MCF 10A (cell line): ENCODE measurements at regions of chr2 and their contacts with region 1.

Region 1: DNA sequence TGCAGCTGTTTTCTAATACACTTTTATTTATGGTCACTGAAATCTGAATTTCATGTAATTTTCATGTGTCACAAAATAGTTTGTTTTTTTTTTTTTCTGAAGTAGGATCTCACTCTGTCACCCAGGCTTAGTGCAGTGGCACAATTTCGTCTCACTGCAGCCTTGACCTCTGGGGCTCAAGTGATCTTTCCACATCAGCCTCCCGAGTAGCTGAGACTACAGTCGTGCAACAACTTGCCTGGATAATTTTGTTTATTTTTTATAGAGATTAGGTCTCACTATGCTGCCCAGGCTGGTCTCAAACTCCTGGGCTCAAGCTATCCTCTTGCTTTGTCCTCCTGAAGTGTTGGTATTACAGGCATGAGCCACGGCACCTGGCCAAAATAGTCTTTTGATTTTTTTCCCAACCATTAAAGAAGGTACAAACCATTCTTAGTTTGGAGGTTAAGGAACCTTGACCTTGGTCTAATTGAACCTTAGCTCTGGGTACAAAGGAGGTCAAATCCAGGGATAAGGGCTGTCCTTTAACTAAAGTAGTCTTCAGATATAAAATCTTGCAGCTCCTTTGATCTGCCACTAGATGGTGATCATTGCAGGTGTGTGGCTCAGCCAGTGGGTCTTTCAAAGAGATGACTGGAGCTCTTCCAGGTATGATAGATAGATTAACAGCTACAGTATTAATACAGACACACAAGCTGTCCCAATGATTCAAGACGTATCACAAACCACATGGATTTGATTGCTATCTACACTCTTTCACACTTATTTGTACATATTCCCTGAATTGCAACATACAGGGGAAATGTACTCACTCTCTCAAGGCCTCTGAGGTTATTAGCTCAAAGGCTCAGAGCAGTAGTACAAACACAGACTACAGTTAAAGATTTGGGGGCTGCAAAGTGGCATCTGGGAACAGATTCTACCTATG is 4.7 kb upstream of the KRCC1 start:
- DNase-seq: peak; percentile 55
- H3K4me3 Mint-ChIP-seq: no peak overlapping the region
- H3K27ac Mint-ChIP-seq: no peak overlapping the region
- H3K4me1 Mint-ChIP-seq: peaks cover 6% of the 10 kb centered on the region
- H3K27me3 Mint-ChIP-seq: no peaks in the 10 kb centered on the region
- CTCF ChIP-seq: peak; percentile 82

Region 2: GRCh38 chr2:88049622-88050021 is 10.6 kb before region 1 on chr2:
- CTCF ChIA-PET with region 1: interaction called, 26 read pairs
- POLR2A ChIA-PET with region 1: interaction called, 8 read pairs
- intact Hi-C with region 1: no loop called
- DNase-seq: no peak
- H3K4me3 Mint-ChIP-seq: no peak overlapping the region
- H3K27ac Mint-ChIP-seq: no peak overlapping the region
- H3K4me1 Mint-ChIP-seq: peaks cover 17% of the 10 kb centered on the region
- H3K27me3 Mint-ChIP-seq: no peaks in the 10 kb centered on the region
- CTCF ChIP-seq: no peak

Region 3: GRCh38 chr2:88082781-88083180 is 22.5 kb after region 1 on chr2:
- CTCF ChIA-PET with region 1: interaction called, 15 read pairs
- POLR2A ChIA-PET with region 1: no interaction called
- intact Hi-C with region 1: no loop called
- DNase-seq: no peak
- H3K4me3 Mint-ChIP-seq: no peak overlapping the region
- H3K27ac Mint-ChIP-seq: no peak overlapping the region
- H3K4me1 Mint-ChIP-seq: no peaks in the 10 kb centered on the region
- H3K27me3 Mint-ChIP-seq: no peaks in the 10 kb centered on the region
- CTCF ChIP-seq: no peak

Region 4: GRCh38 chr2:88125344-88125923 is 65.2 kb after region 1 on chr2:
- CTCF ChIA-PET with region 1: interaction called, 13 read pairs
- POLR2A ChIA-PET with region 1: no interaction called
- intact Hi-C with region 1: no loop called
- DNase-seq: no peak
- H3K4me3 Mint-ChIP-seq: no peak overlapping the region
- H3K27ac Mint-ChIP-seq: no peak overlapping the region
- H3K4me1 Mint-ChIP-seq: no peaks in the 10 kb centered on the region
- H3K27me3 Mint-ChIP-seq: peaks cover 47% of the 10 kb centered on the region
- CTCF ChIP-seq: no peak

Region 5: DNA sequence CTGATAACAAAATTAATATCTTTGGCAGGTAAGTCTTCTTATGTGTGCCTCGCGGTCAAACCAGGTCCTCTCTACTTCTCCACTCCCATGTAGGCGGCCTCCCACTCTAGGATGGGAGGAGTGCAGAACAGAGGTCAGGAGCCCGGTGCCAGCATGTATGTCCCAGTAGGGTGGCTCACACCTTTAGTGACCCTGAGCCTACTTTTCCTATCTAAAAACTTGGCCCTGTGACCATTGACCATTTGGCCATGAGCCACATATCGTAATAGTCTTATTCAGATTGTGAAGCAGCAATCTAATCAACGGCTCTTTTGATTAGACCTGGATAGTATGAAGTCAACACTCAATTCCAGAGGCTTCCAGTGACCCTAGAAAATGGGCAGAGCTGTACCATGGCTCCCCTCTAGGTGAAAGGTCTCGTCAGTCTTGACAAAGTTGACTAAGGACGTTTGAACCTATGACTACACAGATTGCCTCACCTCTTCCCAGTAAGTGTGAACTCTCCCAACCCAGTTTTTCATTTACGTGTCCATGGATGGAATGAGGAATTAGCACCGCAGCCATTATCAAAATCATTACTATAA is 84.8 kb after region 1 on chr2:
- CTCF ChIA-PET with region 1: interaction called, 18 read pairs
- POLR2A ChIA-PET with region 1: no interaction called
- intact Hi-C with region 1: no loop called
- DNase-seq: no peak
- H3K4me3 Mint-ChIP-seq: no peak overlapping the region
- H3K27ac Mint-ChIP-seq: no peak overlapping the region
- H3K4me1 Mint-ChIP-seq: no peaks in the 10 kb centered on the region
- H3K27me3 Mint-ChIP-seq: peaks cover 43% of the 10 kb centered on the region
- CTCF ChIP-seq: no peak

Region 6: DNA sequence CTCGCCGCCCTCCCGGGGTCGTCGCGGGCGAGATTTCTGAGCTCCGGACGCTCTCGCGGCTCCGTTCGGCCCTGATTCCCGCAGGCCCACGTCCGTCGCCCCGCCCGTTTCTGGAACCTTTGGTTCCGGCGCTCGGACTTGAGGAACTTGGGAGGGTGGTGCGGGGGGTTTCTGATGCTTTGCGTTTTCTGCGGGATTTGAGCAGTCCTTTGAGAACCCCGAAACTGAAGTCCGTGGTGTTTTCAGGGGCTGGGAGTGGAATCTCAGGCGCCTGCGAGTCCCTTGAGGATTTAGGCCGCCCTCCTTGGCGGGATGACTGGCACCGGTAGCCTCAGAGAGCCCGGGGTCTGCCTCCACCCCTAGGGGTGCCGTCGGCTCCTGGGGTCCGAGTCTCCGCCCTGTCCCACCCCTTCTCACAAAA is 110.2 kb after region 1 on chr2:
- CTCF ChIA-PET with region 1: interaction called, 293 read pairs
- POLR2A ChIA-PET with region 1: no interaction called
- intact Hi-C with region 1: no loop called
- DNase-seq: peak; percentile 26
- H3K4me3 Mint-ChIP-seq: peak overlapping the region; percentile 72
- H3K27ac Mint-ChIP-seq: peak overlapping the region; percentile 76
- H3K4me1 Mint-ChIP-seq: no peaks in the 10 kb centered on the region
- H3K27me3 Mint-ChIP-seq: no peaks in the 10 kb centered on the region
- CTCF ChIP-seq: no peak

Region 7: GRCh38 chr2:88187038-88187676 is 126.9 kb after region 1 on chr2:
- CTCF ChIA-PET with region 1: interaction called, 104 read pairs
- POLR2A ChIA-PET with region 1: interaction called, 8 read pairs
- intact Hi-C with region 1: loop called (anchors 1 kb)
- DNase-seq: peak; percentile 80
- H3K4me3 Mint-ChIP-seq: no peak overlapping the region
- H3K27ac Mint-ChIP-seq: no peak overlapping the region
- H3K4me1 Mint-ChIP-seq: peaks cover 8% of the 10 kb centered on the region
- H3K27me3 Mint-ChIP-seq: no peaks in the 10 kb centered on the region
- CTCF ChIP-seq: peak; percentile 74

Region 8: GRCh38 chr2:88218981-88219380 is 158.7 kb after region 1 on chr2:
- CTCF ChIA-PET with region 1: no interaction called
- POLR2A ChIA-PET with region 1: no interaction called
- intact Hi-C with region 1: no loop called
- DNase-seq: no peak
- H3K4me3 Mint-ChIP-seq: no peak overlapping the region
- H3K27ac Mint-ChIP-seq: no peak overlapping the region
- H3K4me1 Mint-ChIP-seq: no peaks in the 10 kb centered on the region
- H3K27me3 Mint-ChIP-seq: peaks cover 14% of the 10 kb centered on the region
- CTCF ChIP-seq: no peak

Region 9: GRCh38 chr2:88372042-88372441 is 311.8 kb after region 1 on chr2:
- CTCF ChIA-PET with region 1: no interaction called
- POLR2A ChIA-PET with region 1: no interaction called
- intact Hi-C with region 1: no loop called
- DNase-seq: no peak
- H3K4me3 Mint-ChIP-seq: no peak overlapping the region
- H3K27ac Mint-ChIP-seq: no peak overlapping the region
- H3K4me1 Mint-ChIP-seq: no peaks in the 10 kb centered on the region
- H3K27me3 Mint-ChIP-seq: no peaks in the 10 kb centered on the region
- CTCF ChIP-seq: no peak